Spleen (tissue), 13 donors: ENCODE measurements at regions of chrX and their contacts with region 1.

Region 1: DNA sequence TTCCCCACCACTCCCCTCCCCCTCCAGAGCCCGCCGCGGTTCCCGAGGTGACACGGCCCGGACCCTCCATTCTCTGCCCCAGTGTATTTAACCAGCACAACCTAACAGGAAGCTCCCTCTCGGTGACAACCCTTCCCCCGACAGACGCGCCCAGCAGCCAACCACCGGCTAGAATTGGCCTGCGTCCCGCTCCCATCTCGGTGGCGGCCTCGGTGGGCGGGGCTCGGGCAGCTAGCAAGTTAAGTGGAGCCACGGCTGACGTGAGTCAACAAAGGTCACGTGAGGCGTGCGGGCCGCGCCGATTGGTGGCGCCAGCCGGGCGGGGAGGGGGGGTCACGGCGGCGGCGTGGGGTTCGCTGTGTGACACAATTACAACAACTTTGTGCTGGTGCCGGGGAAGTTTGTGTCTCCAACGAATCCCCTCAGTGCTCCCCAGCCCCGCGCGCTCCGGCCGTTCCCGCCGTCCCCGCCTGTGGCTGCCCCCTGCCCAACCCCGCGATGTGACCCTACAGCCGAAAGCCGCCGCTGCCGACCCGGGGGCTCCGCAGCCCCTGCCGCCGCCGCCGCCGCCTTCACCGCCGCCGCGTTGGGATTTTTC is at the start of gene KDM6A:
- DNase-seq: peak; percentile 100
- H3K4me3 ChIP-seq: peak within 1 kb of the TSS; percentile 50 to 88 (median 76)
- H3K27ac ChIP-seq: peak within 1 kb of the TSS; percentile 98 to 100 (median 99)
- H3K4me1 ChIP-seq: peaks cover 16 to 46% (median 38%) of the 10 kb centered on the region in 6 donors
- H3K27me3 ChIP-seq: no peaks in the 10 kb centered on the region
- CTCF ChIP-seq: peak in 1 of 11 experiments; percentile 3
- POLR2A ChIP-seq: peak in 1 of 3 donors; percentile 81
- total RNA-seq, gene KDM6A: 32.1 to 68.2 (median 51.2) TPM

Region 2: DNA sequence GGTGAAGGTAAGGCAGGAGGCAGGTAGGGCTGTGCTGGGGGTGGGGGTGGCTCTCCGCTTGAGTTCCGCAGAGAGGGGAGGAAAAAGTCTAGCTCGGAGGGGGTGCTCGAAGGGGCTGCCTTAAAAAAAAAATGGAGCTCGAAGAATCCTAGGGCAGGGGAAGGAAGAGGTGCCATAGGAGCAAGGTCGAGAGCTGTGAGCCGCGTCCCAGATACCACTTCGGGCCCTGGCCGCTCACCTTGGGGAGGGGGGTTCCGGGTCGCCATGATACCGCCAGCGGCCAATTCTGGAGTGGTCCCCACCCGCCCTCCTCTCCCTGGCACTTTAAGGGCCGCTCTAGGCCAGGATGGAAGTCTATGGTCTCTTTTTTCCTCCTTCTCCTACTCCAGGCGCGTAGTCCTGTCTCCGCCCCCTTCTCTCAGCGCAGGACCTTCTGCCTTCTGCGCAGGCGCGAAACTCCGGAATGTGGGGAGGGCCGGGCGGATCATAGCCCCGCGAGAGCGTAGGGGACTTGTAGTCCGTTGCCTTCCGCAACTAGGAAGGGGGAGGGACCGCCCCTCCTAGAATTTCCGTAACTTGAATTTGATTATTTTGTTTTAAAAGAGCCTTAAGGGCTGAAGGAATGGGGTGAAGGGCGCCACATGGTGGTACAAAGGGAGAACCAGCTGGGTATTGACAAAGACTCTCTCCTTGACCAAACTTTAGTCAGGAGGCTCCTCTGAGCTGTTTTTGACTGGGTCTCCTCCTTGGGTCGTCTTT is 330.2 kb before region 1 on chrX and contains the start of gene FUNDC1:
- intact Hi-C with region 1: loop called (anchors 10 kb)
- DNase-seq: peak; percentile 97
- H3K4me3 ChIP-seq: peak within 1 kb of the TSS; percentile 39 to 83 (median 60)
- H3K27ac ChIP-seq: peak within 1 kb of the TSS; percentile 39 to 87 (median 78)
- H3K4me1 ChIP-seq: peaks cover 0 to 23% (median 10%) of the 10 kb centered on the region in 6 donors
- H3K27me3 ChIP-seq: no peaks in the 10 kb centered on the region
- CTCF ChIP-seq: peak in 10 of 11 experiments; percentile 11 to 55 (median 42)
- POLR2A ChIP-seq: peak in 1 of 3 donors; percentile 36
- total RNA-seq, gene FUNDC1: 9.5 to 13.7 (median 11.5) TPM

Region 3: GRCh38 chrX:45070116-45071007 is 197.4 kb after region 1 on chrX:
- intact Hi-C with region 1: loop called (anchors 5 kb)
- DNase-seq: no peak
- H3K4me3 ChIP-seq: no peak overlapping the region
- H3K27ac ChIP-seq: peak overlapping the region in 6 of 8 donors; percentile 7 to 41 (median 25)
- H3K4me1 ChIP-seq: peaks cover 20 to 35% (median 27%) of the 10 kb centered on the region in 6 donors
- H3K27me3 ChIP-seq: no peaks in the 10 kb centered on the region
- CTCF ChIP-seq: peak in 10 of 11 experiments; percentile 28 to 66 (median 58)
- POLR2A ChIP-seq: no peak